Activated T-helper 1 cell treated with anti-CD3 and anti-CD28 coated beads, Interleukin-12 subunit alpha, Interleukin-12 subunit beta, Interleukin-2, Interleukin-4 antibody, amounts not matched to agents 30 ng/mL and 10 ng/mL and 1 ng/mL, durations not matched to agents 14 hours and 24 hours and 36 hours (primary cell): ENCODE measurements at regions of chr1 and their contacts with region 1.

Region 1: DNA sequence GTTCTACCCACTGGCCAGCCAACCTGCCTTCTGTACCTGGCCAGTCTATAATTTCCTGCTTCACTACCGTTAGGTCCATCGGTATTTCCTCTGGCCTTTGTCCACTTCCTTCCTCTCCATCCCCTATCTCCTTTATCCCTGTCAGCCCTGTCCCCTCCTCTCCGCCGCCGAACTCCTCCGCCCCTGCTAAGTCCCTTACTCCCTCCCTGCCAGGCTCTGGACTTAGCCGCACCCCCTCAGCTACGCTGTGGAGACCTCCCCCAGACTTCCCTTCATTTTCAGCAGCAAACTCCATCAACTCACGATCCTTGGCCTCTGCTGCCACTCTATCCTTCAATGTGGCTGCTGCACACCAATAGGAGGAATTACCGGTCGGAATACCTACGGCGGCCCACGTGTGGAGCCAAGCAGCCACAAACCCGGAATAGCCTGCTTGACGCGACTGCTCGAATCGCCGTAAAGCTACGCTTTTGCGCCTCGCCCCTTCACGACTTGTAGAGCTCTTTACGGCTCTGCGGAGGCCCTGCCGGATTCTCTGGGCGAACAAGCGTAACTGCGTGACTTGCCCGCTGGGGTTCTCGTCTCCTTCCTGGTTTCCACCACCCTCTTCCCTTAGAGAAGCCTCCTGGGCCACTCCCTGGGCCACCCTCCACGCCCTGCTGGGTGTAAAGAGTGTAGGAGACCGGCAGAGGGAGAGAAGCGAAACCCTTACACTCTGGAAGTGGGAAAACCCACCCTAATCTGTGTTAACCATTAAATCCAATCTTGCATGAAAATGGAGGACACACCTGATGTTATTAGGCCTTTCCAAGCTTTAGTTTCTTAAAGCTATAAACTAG is at the start of gene ZNHIT6:
- DNase-seq: peak; percentile 82
- H3K4me3 Mint-ChIP-seq: no peak within 1 kb of the TSS
- H3K27ac Mint-ChIP-seq: no peak within 1 kb of the TSS
- H3K4me1 Mint-ChIP-seq: peaks cover 11% of the 10 kb centered on the region
- H3K27me3 Mint-ChIP-seq: no peaks in the 10 kb centered on the region
- total RNA-seq, gene ZNHIT6: 24.6 and 26.3 TPM in 2 replicates

Region 2: GRCh38 chr1:85061711-85062424 is 646.3 kb before region 1 on chr1:
- intact Hi-C with region 1: loop called (anchors 10 kb)
- DNase-seq: peak; percentile 87
- H3K4me3 Mint-ChIP-seq: peak overlapping the region; percentile 85
- H3K27ac Mint-ChIP-seq: peak overlapping the region; percentile 62
- H3K4me1 Mint-ChIP-seq: peaks cover 15% of the 10 kb centered on the region
- H3K27me3 Mint-ChIP-seq: peaks cover 16% of the 10 kb centered on the region

Region 3: GRCh38 chr1:85297855-85298629 is 410.2 kb before region 1 on chr1:
- intact Hi-C with region 1: loop called (anchors 5 kb)
- DNase-seq: peak; percentile 62
- H3K4me3 Mint-ChIP-seq: peak overlapping the region; percentile 1
- H3K27ac Mint-ChIP-seq: peak overlapping the region; percentile 80
- H3K4me1 Mint-ChIP-seq: peaks cover 34% of the 10 kb centered on the region
- H3K27me3 Mint-ChIP-seq: peaks cover 47% of the 10 kb centered on the region

Region 4: GRCh38 chr1:85576642-85577418 is 131.4 kb before region 1 on chr1:
- intact Hi-C with region 1: loop called (anchors 2 kb)
- DNase-seq: peak; percentile 47
- H3K4me3 Mint-ChIP-seq: peak overlapping the region; percentile 71
- H3K27ac Mint-ChIP-seq: no peak overlapping the region
- H3K4me1 Mint-ChIP-seq: peaks cover 19% of the 10 kb centered on the region
- H3K27me3 Mint-ChIP-seq: peaks cover 73% of the 10 kb centered on the region

Region 5: DNA sequence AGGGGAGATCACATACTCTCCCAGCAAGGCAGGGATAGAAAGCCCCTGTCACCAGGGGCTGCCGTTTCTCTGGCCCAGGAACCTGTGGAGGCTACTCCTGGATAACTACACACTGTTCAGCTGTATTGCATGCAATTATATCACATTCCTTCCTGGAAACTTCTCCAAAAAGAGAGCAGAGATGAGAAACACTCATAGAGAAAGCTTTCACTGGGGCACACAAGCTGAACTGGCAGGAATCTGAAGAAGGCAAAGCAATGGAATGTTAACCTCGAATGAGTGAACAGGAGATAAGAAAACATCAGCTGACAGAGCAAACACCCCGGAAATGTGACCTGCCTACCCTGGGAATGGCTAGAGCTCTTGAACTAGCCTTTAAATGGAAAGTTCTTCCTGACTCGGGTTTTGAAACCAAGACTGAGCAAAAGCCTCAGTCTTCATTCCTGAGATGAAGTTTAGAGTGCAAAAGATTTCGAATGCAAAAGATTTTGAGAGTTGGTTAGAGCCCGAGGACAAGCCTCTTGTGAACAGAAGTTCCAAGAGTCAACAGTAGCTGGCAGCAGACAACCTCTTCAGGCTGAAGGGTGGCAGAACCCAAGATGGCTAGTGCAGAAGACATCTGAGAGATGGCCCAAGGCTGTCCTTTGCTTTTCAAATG is 95.4 kb before region 1 on chr1:
- intact Hi-C with region 1: no loop called
- DNase-seq: no peak
- H3K4me3 Mint-ChIP-seq: no peak overlapping the region
- H3K27ac Mint-ChIP-seq: no peak overlapping the region
- H3K4me1 Mint-ChIP-seq: no peaks in the 10 kb centered on the region
- H3K27me3 Mint-ChIP-seq: no peaks in the 10 kb centered on the region

Region 6: GRCh38 chr1:85623051-85623471 is 85.1 kb before region 1 on chr1:
- intact Hi-C with region 1: loop called (anchors 1 kb)
- DNase-seq: no peak
- H3K4me3 Mint-ChIP-seq: no peak overlapping the region
- H3K27ac Mint-ChIP-seq: peak overlapping the region; percentile 18
- H3K4me1 Mint-ChIP-seq: peaks cover 15% of the 10 kb centered on the region
- H3K27me3 Mint-ChIP-seq: no peaks in the 10 kb centered on the region

Region 7: GRCh38 chr1:85638412-85638811 is 69.8 kb before region 1 on chr1:
- intact Hi-C with region 1: no loop called
- DNase-seq: no peak
- H3K4me3 Mint-ChIP-seq: no peak overlapping the region
- H3K27ac Mint-ChIP-seq: no peak overlapping the region
- H3K4me1 Mint-ChIP-seq: no peaks in the 10 kb centered on the region
- H3K27me3 Mint-ChIP-seq: no peaks in the 10 kb centered on the region

Region 8: DNA sequence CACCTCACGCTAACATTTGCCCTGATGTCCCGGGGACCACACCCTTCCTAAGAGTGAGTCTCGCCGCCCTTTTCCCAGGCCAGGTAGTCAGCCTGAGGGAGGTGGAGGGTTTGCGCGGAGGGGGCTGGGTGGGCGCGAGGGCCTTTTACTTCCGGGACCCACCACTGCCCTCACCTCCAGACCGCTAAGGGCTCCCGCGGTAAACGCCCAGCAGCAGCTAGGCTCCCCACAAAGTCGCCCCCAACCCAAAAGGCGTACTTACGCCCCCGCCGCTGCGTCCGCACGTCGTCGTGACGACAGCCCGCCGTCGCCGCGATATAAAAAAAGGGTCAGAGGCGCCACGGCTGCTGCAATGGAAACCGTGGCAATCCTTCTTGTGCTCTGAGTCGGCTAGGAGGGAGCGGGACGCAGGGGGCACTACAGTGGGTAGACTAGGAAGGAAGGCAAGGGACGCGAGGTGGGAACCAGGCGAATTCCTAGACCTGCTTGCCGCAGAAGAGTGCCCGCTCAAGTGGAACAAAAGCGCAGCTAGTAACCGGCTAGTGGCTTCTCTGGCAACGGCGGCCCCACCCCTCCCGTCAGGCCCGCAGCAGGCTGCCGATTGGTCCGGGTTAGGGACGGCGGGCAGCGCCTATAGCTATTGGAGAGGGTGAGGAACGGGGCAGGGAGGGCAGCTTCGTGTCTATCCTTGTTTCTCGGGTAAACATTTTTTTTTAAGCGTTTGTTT is 687.7 kb after region 1 on chr1 and contains the start of gene ODF2L:
- intact Hi-C with region 1: loop called (anchors 10 kb)
- DNase-seq: peak; percentile 90
- H3K4me3 Mint-ChIP-seq: peak within 1 kb of the TSS; percentile 97
- H3K27ac Mint-ChIP-seq: peak within 1 kb of the TSS; percentile 96
- H3K4me1 Mint-ChIP-seq: peaks cover 54% of the 10 kb centered on the region
- H3K27me3 Mint-ChIP-seq: no peaks in the 10 kb centered on the region
- total RNA-seq, gene ODF2L: 21.0 and 22.4 TPM in 2 replicates

Region 9: GRCh38 chr1:87404296-87404695 is 1696.1 kb after region 1 on chr1:
- intact Hi-C with region 1: loop called (anchors 5 kb)
- DNase-seq: no peak
- H3K4me3 Mint-ChIP-seq: no peak overlapping the region
- H3K27ac Mint-ChIP-seq: peak overlapping the region; percentile 27
- H3K4me1 Mint-ChIP-seq: peaks cover 26% of the 10 kb centered on the region
- H3K27me3 Mint-ChIP-seq: peaks cover 19% of the 10 kb centered on the region